Activated naive CD4-positive, alpha-beta T cell treated with anti-CD3 and anti-CD28 coated beads for 36 hours (primary cell): ENCODE measurements at regions of chr16 and their contacts with region 1.

Region 1: GRCh38 chr16:1942810-1943726 is at the start of gene MSRB1:
- DNase-seq: peak; percentile 100
- H3K4me3 Mint-ChIP-seq: peak within 1 kb of the TSS; percentile 82
- H3K27ac Mint-ChIP-seq: peak within 1 kb of the TSS; percentile 75
- H3K4me1 Mint-ChIP-seq: peaks cover 26% of the 10 kb centered on the region
- H3K27me3 Mint-ChIP-seq: no peaks in the 10 kb centered on the region
- total RNA-seq, gene MSRB1: 8.5 to 11.0 TPM

Region 2: GRCh38 chr16:1772736-1773584 is 170.1 kb before region 1 on chr16 and contains the starts of genes EME2 and MRPS34:
- CTCF ChIA-PET with region 1: interaction called, 3 read pairs
- intact Hi-C with region 1: loop called (anchors 5 kb)
- DNase-seq: peak; percentile 85
- H3K4me3 Mint-ChIP-seq: peak within 1 kb of the TSS; percentile 93
- H3K27ac Mint-ChIP-seq: peak within 1 kb of the TSS; percentile 93
- H3K4me1 Mint-ChIP-seq: peaks cover 7% of the 10 kb centered on the region
- H3K27me3 Mint-ChIP-seq: no peaks in the 10 kb centered on the region
- total RNA-seq, gene EME2: 7.7 to 7.8 TPM
- total RNA-seq, gene MRPS34: 122 to 138 TPM

Region 3: DNA sequence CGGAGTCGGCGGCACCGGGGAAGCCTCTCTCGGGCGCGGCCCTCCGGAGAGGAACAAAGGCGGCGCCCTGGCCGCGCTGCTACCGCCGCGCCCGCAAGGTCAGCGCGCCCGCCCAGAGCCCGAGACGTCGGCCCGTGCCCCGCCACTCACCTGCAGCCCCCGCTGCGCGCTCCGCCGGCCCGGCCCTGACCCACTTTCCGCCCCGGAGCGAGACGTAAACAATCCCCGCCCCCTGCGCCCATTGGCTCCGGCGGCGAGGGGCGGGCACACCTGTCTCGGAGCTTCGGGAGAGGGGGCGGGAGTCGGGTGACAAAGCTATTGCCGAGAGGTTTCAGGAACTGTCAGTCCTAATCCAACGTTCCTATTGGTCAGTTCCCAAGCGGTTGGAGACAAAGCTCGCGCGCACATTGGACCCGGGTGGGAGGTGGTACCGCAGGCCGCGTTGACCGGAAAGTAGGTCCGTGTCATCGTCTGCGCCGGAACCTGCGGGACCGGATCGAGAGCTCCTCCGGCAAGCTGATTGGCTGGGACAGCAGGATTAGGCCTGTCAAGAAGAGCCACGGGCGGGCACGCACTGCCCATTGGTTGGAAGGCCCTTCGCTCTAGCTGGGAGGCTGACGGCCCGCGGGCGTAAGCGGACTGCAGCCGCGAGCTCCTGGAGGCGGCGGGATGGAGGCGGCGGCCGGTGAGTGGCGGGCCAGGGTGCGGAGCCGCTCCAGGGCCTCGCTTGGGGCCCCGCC is 160.5 kb before region 1 on chr16 and contains the starts of genes NUBP2 and SPSB3:
- CTCF ChIA-PET with region 1: no interaction called
- intact Hi-C with region 1: loop called (anchors 1 kb)
- DNase-seq: peak; percentile 100
- H3K4me3 Mint-ChIP-seq: peak within 1 kb of the TSS; percentile 90
- H3K27ac Mint-ChIP-seq: peak within 1 kb of the TSS; percentile 73
- H3K4me1 Mint-ChIP-seq: peaks cover 28% of the 10 kb centered on the region
- H3K27me3 Mint-ChIP-seq: no peaks in the 10 kb centered on the region
- total RNA-seq, gene NUBP2: 37.9 to 42.4 TPM
- total RNA-seq, gene SPSB3: 14.0 to 17.0 TPM

Region 4: DNA sequence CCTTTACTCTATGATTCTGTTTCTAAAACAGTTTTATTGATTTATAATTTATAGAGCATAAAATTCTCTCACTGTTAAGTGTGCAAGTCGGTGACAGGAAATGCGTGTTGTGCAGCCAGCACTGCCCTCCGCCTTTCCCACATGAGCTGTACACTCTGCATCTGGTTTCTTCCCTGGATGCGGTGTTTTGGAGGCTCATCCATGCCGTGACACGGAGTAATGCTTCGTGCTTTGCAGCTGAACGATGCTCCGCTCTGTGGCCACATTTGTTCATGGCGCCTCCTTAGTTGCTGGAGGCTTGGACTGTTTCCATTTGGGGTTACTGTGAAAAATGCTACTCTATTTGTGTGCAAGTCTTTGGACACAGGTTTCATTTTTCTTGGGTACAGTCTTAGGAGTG is 142.4 kb before region 1 on chr16:
- CTCF ChIA-PET with region 1: no interaction called
- intact Hi-C with region 1: no loop called
- DNase-seq: no peak
- H3K4me3 Mint-ChIP-seq: no peak overlapping the region
- H3K27ac Mint-ChIP-seq: no peak overlapping the region
- H3K4me1 Mint-ChIP-seq: no peaks in the 10 kb centered on the region
- H3K27me3 Mint-ChIP-seq: no peaks in the 10 kb centered on the region

Region 5: DNA sequence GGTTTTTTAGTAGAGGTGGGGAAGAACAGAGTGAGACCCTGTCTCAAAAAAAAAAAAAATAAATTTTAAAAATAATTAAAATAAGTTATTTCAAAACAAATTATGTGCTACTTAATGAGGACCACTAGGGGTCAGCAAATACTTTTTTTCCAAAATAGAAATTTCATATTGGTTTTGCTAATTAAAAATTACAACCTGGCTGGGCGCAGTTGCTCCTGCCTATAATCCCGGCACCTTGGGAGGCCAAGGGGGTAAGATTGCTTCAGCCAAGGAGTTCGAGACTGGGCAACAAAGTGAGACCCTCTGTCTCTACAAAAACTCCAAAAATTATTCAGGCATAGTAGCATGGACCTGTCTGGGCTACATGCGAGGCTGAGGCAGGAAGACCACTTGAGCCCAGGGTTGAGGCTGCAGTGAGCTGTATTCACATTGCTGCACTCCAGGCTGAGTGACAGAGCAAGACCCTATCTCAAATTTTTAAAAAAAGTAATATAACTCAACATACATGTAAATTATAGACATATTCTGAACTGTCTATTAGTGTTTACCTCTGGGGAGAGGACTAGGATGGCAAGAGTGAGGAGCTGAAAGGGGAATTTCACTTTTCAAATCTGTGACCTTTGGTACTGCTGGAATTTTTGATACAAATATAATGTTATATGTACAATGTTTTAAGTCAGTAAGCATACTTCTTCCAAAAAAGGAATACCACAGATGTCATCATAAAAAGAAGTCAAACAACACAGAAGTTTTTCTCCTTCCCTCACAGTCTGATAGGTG is 79.2 kb before region 1 on chr16:
- CTCF ChIA-PET with region 1: interaction called, 3 read pairs
- intact Hi-C with region 1: loop called (anchors 5 kb)
- DNase-seq: no peak
- H3K4me3 Mint-ChIP-seq: no peak overlapping the region
- H3K27ac Mint-ChIP-seq: no peak overlapping the region
- H3K4me1 Mint-ChIP-seq: no peaks in the 10 kb centered on the region
- H3K27me3 Mint-ChIP-seq: no peaks in the 10 kb centered on the region

Region 6: DNA sequence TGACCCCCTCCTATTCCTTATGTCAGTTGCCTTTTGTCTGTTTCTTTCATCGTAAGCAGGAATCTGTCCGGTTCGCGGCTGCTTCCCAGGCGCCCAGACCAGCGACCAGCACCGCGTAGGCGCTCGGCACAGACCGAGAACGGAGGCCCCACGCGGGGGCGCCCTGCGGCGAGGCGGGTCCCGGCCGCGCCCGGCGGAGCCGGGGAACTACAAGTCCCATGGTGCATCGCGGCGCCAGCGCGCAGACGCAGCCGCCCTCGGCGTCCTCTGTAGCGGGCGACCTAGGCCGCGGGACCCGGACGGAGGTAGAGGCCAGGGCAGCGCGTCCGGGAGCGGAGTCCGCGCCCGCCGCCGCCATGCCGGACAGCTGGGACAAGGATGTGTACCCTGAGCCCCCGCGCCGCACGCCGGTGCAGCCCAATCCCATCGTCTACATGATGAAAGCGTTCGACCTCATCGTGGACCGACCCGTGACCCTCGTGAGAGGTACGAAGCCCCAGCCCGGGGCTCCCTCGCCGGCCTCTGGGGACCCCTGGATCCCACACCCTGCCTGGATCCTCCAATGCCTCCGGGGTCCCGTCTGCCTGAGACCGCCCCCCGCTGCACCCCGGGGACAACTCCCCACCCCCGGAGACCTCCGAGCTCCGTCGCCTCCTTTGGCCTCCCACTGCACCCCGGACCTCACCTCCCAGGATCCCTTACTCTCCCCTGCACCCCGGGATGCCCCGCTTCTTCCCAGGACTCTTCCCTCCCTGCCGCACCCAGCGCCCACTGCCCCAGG is 16.4 kb after region 1 on chr16 and contains the start of gene NDUFB10:
- CTCF ChIA-PET with region 1: interaction called, 6 read pairs
- intact Hi-C with region 1: loop called (anchors 1 kb)
- DNase-seq: peak; percentile 91
- H3K4me3 Mint-ChIP-seq: peak within 1 kb of the TSS; percentile 96
- H3K27ac Mint-ChIP-seq: peak within 1 kb of the TSS; percentile 87
- H3K4me1 Mint-ChIP-seq: peaks cover 36% of the 10 kb centered on the region
- H3K27me3 Mint-ChIP-seq: no peaks in the 10 kb centered on the region
- total RNA-seq, gene NDUFB10: 111 TPM

Region 7: DNA sequence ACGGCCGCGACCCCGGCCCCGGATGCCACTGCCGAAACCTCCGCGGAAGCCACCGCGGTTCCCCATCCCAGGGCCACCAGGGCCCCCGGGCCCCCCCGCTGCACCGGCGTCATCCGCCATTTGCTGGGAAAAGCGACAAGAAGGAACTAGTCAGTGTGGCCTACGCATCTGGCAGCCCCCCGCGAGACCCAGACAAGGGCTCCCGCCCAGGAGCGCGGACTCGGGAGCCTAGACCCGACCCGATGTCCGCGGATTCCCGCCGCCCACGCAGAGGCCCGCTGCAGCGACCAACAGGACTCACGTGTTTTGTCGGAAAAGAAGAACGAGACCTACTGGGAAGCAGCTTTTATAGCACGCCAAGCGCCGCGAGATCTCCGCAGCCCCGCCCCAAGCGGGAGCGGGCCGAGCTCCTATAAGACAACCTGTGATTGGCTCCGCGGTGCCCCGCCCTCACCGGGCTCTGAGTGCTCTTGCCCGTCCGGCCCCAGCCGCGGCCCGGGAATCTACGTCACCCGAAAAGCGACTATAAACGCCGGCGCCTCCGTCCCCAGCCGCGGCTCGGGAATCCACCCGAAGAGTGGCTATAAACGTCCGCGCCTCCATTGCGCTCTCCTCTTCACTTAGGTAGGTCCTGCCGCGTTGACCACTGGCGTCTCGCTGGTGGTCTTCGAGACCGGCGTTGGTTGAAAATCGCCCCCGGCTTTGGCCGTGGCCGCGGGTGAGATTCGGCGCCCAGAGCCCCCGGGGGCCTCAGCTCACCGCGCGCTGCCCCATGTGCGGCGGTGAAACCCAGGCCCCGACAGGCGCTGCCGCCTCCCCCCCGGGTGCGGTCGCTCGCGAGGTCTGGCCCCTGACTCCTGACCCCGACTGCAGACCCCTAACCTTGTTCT is 21.7 kb after region 1 on chr16 and contains the start of gene RPS2:
- CTCF ChIA-PET with region 1: interaction called, 6 read pairs
- intact Hi-C with region 1: loop called (anchors 1 kb)
- DNase-seq: peak; percentile 99
- H3K4me3 Mint-ChIP-seq: peak within 1 kb of the TSS; percentile 97
- H3K27ac Mint-ChIP-seq: peak within 1 kb of the TSS; percentile 95
- H3K4me1 Mint-ChIP-seq: peaks cover 42% of the 10 kb centered on the region
- H3K27me3 Mint-ChIP-seq: no peaks in the 10 kb centered on the region
- total RNA-seq, gene RPS2: 7,042 to 7,057 TPM

Region 8: GRCh38 chr16:1991948-1992703 is 49.1 kb after region 1 on chr16:
- CTCF ChIA-PET with region 1: no interaction called
- intact Hi-C with region 1: loop called (anchors 1 kb)
- DNase-seq: peak; percentile 99
- H3K4me3 Mint-ChIP-seq: peak overlapping the region; percentile 65
- H3K27ac Mint-ChIP-seq: no peak overlapping the region
- H3K4me1 Mint-ChIP-seq: peaks cover 24% of the 10 kb centered on the region
- H3K27me3 Mint-ChIP-seq: peaks cover 24% of the 10 kb centered on the region